ENCODE measurements at regions of chr1 and their contacts with region 1.

Region 1: GRCh38 chr1:150696590-150697524 is at the start of gene GOLPH3L:
- DNase-seq: peak; percentile 95 to 99
- H3K4me3 ChIP-seq: peak within 1 kb of the TSS; percentile 83
- H3K27ac ChIP-seq: peak within 1 kb of the TSS; percentile 40
- H3K4me1 ChIP-seq: peaks cover 10% of the 10 kb centered on the region
- H3K27me3 ChIP-seq: no peaks in the 10 kb centered on the region
- CTCF ChIP-seq: no peak
- total RNA-seq, gene GOLPH3L: 36.5 and 52.7 TPM in 2 replicates

Region 2: DNA sequence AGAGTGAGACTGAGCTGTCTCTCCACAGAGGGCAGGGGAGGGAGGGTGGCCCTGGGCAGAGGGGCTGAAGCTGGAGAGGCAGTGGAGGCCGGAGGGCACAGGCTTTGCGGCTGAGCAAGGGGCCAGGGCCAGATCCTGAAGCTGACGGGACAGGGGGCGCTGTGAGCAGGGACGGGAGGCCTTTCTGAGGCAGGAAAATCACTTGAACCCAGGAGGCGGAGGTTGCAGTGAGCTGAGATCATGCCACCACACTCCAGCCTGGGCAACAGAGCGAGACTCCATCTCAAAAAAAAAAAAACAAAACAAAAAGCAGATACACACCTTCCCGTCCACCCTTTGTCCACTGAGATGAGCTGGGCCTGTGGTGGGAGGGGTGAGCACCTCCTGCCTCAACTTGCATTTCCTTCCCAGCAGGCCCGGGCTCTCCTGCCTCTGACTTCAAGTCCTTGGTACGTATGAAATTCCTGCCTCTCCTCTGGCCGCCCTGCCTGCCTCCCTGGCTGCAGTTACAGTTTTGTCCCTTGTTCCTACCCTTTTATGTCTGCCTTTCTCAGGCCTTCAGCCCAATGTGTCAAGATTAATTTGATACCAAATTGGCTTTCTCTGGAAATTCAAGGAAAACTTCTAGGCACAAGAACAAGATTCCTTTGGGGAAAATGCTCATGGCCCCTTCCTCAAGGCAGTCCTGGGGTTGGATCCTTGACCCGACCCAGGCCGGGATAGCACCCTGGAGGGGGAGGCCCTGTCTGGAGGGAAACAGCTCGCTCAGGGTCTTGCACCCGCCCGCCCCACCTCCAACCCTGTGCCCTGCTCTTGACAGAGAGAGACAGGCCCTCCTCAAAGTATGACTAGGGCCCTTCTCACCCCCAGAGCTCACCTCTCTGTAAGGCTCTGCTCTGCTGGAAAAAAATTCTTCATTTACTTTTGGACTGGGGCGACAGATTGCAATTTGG is 158.8 kb before region 1 on chr1:
- CTCF ChIA-PET with region 1: no interaction called
- POLR2A ChIA-PET with region 1: interaction called, 15 read pairs
- intact Hi-C with region 1: no loop called
- DNase-seq: peak; percentile 70 to 78
- H3K4me3 ChIP-seq: no peak overlapping the region
- H3K27ac ChIP-seq: peak overlapping the region; percentile 48
- H3K4me1 ChIP-seq: peaks cover 33% of the 10 kb centered on the region
- H3K27me3 ChIP-seq: no peaks in the 10 kb centered on the region
- CTCF ChIP-seq: no peak

Region 3: DNA sequence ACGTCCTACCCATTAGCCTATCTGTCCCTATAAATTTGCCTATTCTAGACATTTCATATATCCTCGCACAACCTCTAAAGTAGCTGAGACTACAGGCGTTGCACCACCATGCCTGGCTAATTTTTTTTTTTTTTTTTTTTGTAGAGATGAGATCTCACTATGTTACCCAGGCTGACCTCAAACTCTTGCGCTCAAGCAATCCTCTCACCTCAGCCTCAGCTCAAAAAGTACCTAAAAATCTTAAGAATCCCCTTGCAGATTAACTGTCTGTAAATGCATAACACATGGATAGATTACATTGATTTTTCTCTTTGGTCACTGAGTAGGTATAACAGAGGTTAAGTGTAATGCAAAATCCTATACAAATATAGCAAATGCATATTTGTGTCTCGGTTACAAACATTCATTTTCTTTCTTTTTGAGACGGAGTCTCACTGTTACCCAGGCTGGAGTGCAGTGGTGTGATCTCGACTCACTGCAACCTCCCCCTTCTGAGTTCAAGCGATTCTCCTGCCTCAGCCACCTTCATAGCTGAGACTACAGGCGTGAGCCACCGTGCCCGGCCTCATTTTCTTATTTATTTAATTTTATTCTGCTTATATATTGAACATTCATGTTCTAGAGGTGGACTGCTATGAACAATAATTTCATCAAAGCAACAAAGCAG is 21.5 kb after region 1 on chr1:
- CTCF ChIA-PET with region 1: no interaction called
- POLR2A ChIA-PET with region 1: interaction called, 11 read pairs
- intact Hi-C with region 1: no loop called
- DNase-seq: no peak
- H3K4me3 ChIP-seq: no peak overlapping the region
- H3K27ac ChIP-seq: no peak overlapping the region
- H3K4me1 ChIP-seq: no peaks in the 10 kb centered on the region
- H3K27me3 ChIP-seq: no peaks in the 10 kb centered on the region
- CTCF ChIP-seq: no peak